Mammary epithelial cell (primary cell): ENCODE measurements at regions of chr2 and their contacts with region 1.

Region 1: GRCh38 chr2:11065883-11066485 is 89.3 kb upstream of the SLC66A3 start:
- DNase-seq: no peak
- H3K4me3 ChIP-seq: no peak overlapping the region
- H3K27ac ChIP-seq: no peak overlapping the region
- H3K4me1 ChIP-seq: no peaks in the 10 kb centered on the region
- H3K27me3 ChIP-seq: peaks cover 8% of the 10 kb centered on the region
- CTCF ChIP-seq: no peak

Region 2: GRCh38 chr2:9087121-9087681 is 1978.8 kb before region 1 on chr2:
- CTCF ChIA-PET with region 1: no interaction called
- dilution Hi-C with region 1: no loop called
- in situ Hi-C with region 1: no loop called
- intact Hi-C with region 1: no loop called
- DNase-seq: no peak
- H3K4me3 ChIP-seq: no peak overlapping the region
- H3K27ac ChIP-seq: no peak overlapping the region
- H3K4me1 ChIP-seq: peaks cover 11% of the 10 kb centered on the region
- H3K27me3 ChIP-seq: no peaks in the 10 kb centered on the region
- CTCF ChIP-seq: no peak

Region 3: GRCh38 chr2:10947005-10947440 is 119.0 kb before region 1 on chr2:
- CTCF ChIA-PET with region 1: no interaction called
- dilution Hi-C with region 1: no loop called
- in situ Hi-C with region 1: no loop called
- intact Hi-C with region 1: no loop called
- DNase-seq: peak; percentile 85
- H3K4me3 ChIP-seq: no peak overlapping the region
- H3K27ac ChIP-seq: no peak overlapping the region
- H3K4me1 ChIP-seq: peaks cover 15% of the 10 kb centered on the region
- H3K27me3 ChIP-seq: peaks cover 2% of the 10 kb centered on the region
- CTCF ChIP-seq: no peak

Region 4: DNA sequence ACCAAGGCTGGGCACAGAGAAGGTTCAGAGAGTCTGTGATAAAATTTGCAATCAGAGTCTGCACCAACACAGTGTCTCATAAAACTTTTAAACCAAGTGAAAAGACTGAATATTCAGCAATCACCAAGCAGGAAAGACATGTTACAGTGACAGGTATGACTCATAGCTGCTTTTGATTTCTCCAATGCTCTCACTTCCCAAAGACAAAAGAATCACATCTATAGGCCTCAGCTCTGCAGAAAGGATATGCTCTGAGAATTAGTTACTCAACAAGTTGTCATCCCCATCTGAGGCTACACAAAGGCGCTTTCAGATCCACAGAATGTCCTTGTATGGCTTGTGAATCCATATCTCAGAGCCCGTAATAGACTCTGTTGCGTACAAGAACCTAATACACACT is 61.8 kb before region 1 on chr2:
- CTCF ChIA-PET with region 1: no interaction called
- dilution Hi-C with region 1: loop called (anchors 10 kb)
- in situ Hi-C with region 1: no loop called
- intact Hi-C with region 1: no loop called
- DNase-seq: peak; percentile 76
- H3K4me3 ChIP-seq: no peak overlapping the region
- H3K27ac ChIP-seq: no peak overlapping the region
- H3K4me1 ChIP-seq: peaks cover 13% of the 10 kb centered on the region
- H3K27me3 ChIP-seq: no peaks in the 10 kb centered on the region
- CTCF ChIP-seq: no peak

Region 5: DNA sequence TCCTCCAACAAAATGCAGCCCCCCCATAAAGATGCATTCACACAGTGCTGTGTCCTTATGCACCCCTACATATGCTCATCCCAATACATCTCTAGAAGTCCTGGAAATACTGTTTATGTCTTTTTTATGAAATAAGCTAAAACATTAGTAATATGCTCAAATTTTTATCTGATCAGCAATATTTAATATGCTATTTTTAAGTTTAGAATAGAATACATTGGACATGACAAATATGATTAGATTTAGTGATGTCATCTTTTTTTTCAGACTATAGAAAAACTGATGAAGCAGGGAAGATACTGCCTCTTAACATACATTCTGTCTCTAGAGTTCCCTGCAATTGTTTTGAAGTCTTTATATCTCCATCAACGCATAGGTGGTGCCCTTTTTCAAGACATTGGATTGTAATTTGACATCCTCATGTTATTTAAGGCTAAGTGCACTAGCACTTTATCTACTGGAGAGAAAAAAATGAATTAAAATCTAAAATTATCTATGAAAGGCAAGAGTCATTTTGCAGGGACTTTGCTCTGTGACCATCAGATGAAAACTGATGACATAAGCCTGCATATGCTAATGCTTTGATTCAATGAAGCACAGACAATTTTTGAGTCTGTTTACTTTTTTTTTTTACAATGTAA is 1075.8 kb after region 1 on chr2:
- CTCF ChIA-PET with region 1: no interaction called
- dilution Hi-C with region 1: no loop called
- in situ Hi-C with region 1: no loop called
- intact Hi-C with region 1: no loop called
- DNase-seq: no peak
- H3K4me3 ChIP-seq: no peak overlapping the region
- H3K27ac ChIP-seq: no peak overlapping the region
- H3K4me1 ChIP-seq: no peaks in the 10 kb centered on the region
- H3K27me3 ChIP-seq: peaks cover 5% of the 10 kb centered on the region
- CTCF ChIP-seq: no peak